Activated CD8-positive, alpha-beta memory T cell treated with anti-CD3 and anti-CD28 coated beads, Interleukin-2, amount 10 ng/mL, durations not matched to agents 7 days and 5 days (primary cell): ENCODE measurements at regions of chr2 and their contacts with region 1.

Region 1: GRCh38 chr2:64914735-64915509 is 74.3 kb upstream of the SLC1A4 start:
- DNase-seq: no peak
- ATAC-seq: no peak
- H3K4me3 Mint-ChIP-seq: no peak overlapping the region
- H3K27ac Mint-ChIP-seq: no peak overlapping the region
- H3K4me1 Mint-ChIP-seq: peaks cover 49% of the 10 kb centered on the region
- H3K27me3 Mint-ChIP-seq: no peaks in the 10 kb centered on the region

Region 2: DNA sequence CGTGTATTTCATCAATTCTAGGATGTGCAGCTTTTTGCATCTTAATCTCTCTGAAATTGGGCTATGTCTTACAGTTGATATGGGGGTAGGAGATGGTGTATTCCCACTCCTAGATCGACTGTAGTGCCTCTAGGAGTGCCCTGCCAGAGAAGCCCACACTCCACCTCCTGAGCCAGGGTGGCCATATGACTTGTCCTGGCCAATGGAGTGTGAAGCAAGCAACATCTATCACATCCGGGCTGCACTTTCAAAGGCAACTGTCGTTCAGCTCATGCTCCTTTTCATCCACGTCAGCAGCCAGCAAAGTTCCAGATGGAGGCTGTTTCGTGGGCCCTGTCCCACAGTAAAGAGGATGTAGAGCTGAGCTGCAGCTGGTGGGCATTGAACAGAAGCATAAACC is 75.1 kb before region 1 on chr2:
- CTCF ChIA-PET with region 1: no interaction called
- DNase-seq: no peak
- ATAC-seq: peak; percentile 60
- H3K4me3 Mint-ChIP-seq: no peak overlapping the region
- H3K27ac Mint-ChIP-seq: no peak overlapping the region
- H3K4me1 Mint-ChIP-seq: peaks cover 4% of the 10 kb centered on the region
- H3K27me3 Mint-ChIP-seq: peaks cover 3% of the 10 kb centered on the region

Region 3: GRCh38 chr2:64865073-64865830 is 49.7 kb before region 1 on chr2:
- CTCF ChIA-PET with region 1: no interaction called
- DNase-seq: peak; percentile 69
- ATAC-seq: peak; percentile 95
- H3K4me3 Mint-ChIP-seq: peak overlapping the region; percentile 66
- H3K27ac Mint-ChIP-seq: no peak overlapping the region
- H3K4me1 Mint-ChIP-seq: no peaks in the 10 kb centered on the region
- H3K27me3 Mint-ChIP-seq: peaks cover 9% of the 10 kb centered on the region

Region 4: GRCh38 chr2:64904413-64905329 is 10.3 kb before region 1 on chr2:
- CTCF ChIA-PET with region 1: interaction called, 15 read pairs
- DNase-seq: no peak
- ATAC-seq: no peak
- H3K4me3 Mint-ChIP-seq: no peak overlapping the region
- H3K27ac Mint-ChIP-seq: no peak overlapping the region
- H3K4me1 Mint-ChIP-seq: peaks cover 17% of the 10 kb centered on the region
- H3K27me3 Mint-ChIP-seq: peaks cover 7% of the 10 kb centered on the region

Region 5: GRCh38 chr2:64945973-64946768 is 31.2 kb after region 1 on chr2:
- CTCF ChIA-PET with region 1: interaction called, 27 read pairs
- DNase-seq: peak; percentile 92
- ATAC-seq: peak; percentile 95
- H3K4me3 Mint-ChIP-seq: peak overlapping the region; percentile 69
- H3K27ac Mint-ChIP-seq: peak overlapping the region; percentile 95
- H3K4me1 Mint-ChIP-seq: peaks cover 58% of the 10 kb centered on the region
- H3K27me3 Mint-ChIP-seq: no peaks in the 10 kb centered on the region

Region 6: DNA sequence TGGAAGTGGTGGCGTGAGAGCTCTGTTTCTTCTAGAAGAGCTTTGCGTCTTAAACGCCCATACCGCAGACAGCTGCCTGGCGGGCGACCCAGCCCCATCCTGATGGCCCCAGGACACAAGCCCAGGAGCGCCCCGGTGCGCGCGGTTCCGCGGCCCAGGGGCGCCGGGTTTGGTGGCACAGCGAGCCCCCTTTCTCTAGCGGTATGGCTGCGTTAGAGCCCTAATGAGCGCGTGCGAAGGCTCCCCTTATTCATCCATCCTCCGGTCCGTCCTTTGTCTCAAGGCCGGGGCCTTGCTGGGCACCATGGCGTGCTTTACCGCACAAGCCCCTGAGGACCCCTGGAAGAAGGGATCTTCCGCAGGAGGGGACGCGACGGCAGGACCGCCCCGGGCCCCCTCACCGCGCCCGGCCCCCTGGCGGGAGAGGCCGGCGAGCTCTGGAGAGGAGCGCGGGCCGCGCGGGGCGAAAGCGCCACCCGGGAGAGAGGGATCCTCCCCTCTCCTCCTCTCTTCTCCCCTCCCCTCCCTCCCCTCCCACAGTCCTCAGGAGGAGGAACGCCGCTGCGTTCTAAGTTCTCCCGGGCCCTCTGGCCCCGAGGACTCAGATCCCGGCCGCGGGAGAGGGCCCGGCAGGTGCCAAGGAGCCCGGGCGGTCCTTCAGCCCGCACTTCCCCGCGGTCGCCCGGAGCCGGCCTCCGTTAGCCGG is 73.7 kb after region 1 on chr2:
- CTCF ChIA-PET with region 1: interaction called, 50 read pairs
- DNase-seq: peak; percentile 91
- ATAC-seq: peak; percentile 45
- H3K4me3 Mint-ChIP-seq: peak overlapping the region; percentile 75
- H3K27ac Mint-ChIP-seq: peak overlapping the region; percentile 78
- H3K4me1 Mint-ChIP-seq: peaks cover 75% of the 10 kb centered on the region
- H3K27me3 Mint-ChIP-seq: peaks cover 3% of the 10 kb centered on the region

Region 7: GRCh38 chr2:65031341-65032018 is 116.6 kb after region 1 on chr2:
- CTCF ChIA-PET with region 1: interaction called, 38 read pairs
- DNase-seq: no peak
- ATAC-seq: peak; percentile 50
- H3K4me3 Mint-ChIP-seq: no peak overlapping the region
- H3K27ac Mint-ChIP-seq: no peak overlapping the region
- H3K4me1 Mint-ChIP-seq: peaks cover 25% of the 10 kb centered on the region
- H3K27me3 Mint-ChIP-seq: no peaks in the 10 kb centered on the region

Region 8: GRCh38 chr2:65049010-65049669 is 134.2 kb after region 1 on chr2:
- CTCF ChIA-PET with region 1: interaction called, 61 read pairs
- DNase-seq: no peak
- ATAC-seq: no peak
- H3K4me3 Mint-ChIP-seq: no peak overlapping the region
- H3K27ac Mint-ChIP-seq: no peak overlapping the region
- H3K4me1 Mint-ChIP-seq: peaks cover 24% of the 10 kb centered on the region
- H3K27me3 Mint-ChIP-seq: no peaks in the 10 kb centered on the region